OCI-LY7 (cell line): ENCODE measurements at regions of chr7 and their contacts with region 1.

Region 1: GRCh38 chr7:22319424-22320403 is 37.2 kb downstream of the RAPGEF5 start:
- DNase-seq: no peak
- H3K4me3 ChIP-seq: no peak overlapping the region
- H3K27ac ChIP-seq: no peak overlapping the region
- H3K4me1 ChIP-seq: peaks cover 19% of the 10 kb centered on the region
- CTCF ChIP-seq: no peak

Region 2: DNA sequence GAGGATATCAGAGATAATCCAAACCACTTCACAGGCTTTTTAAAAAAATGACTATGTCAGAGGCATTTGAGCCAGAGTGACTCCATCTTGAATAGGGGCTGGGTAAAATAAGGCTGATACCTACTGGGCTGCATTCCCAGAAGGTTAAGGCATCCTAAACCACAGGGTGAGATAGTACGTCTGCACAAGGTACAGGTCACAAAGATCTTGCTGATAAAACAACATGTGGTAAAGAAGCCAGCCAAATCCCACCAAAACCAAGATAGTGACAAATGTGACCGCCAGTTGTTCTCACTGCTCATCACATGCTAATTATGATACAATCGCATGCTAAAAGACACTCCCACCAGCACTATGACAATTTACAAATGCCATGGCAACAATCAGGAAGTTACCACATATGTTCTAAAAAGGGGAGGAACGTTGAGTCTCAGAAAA is 140.3 kb before region 1 on chr7:
- CTCF ChIA-PET with region 1: no interaction called
- POLR2A ChIA-PET with region 1: no interaction called
- intact Hi-C with region 1: no loop called
- DNase-seq: no peak
- H3K4me3 ChIP-seq: no peak overlapping the region
- H3K27ac ChIP-seq: no peak overlapping the region
- H3K4me1 ChIP-seq: no peaks in the 10 kb centered on the region
- CTCF ChIP-seq: no peak

Region 3: DNA sequence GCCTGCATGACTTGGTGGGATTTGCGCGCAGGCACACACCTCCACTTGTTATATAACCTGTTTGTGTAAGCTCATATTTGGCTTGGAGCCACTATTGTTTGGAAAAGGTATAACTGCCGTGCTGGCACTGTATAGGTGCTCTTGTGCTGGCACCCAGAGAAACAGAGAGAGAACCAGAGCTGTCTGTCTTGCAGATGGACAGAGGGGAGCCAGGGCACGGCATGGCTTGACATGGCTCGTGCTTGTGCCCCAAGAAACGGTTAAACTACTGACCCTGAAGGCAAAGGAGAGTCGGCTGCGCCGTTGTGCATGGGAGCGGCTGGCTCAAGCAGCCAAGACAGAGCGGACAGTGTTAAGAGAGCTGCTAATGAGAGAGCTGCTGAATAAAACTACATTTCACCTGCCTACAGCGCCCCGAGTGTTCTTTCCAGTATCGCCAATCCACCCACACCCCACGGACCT is 14.0 kb after region 1 on chr7:
- CTCF ChIA-PET with region 1: interaction called, 4 read pairs
- POLR2A ChIA-PET with region 1: interaction called, 60 read pairs
- intact Hi-C with region 1: no loop called
- DNase-seq: no peak
- H3K4me3 ChIP-seq: no peak overlapping the region
- H3K27ac ChIP-seq: no peak overlapping the region
- H3K4me1 ChIP-seq: peaks cover 88% of the 10 kb centered on the region
- CTCF ChIP-seq: no peak